ENCODE measurements at regions of chr11 and their contacts with region 1.

Region 1: GRCh38 chr11:78957476-78958245 is 383.0 kb upstream of the NARS2 start:
- DNase-seq: no peak
- ATAC-seq: no peak
- H3K4me3 ChIP-seq: no peak overlapping the region
- H3K27ac ChIP-seq: no peak overlapping the region
- H3K4me1 ChIP-seq: no peaks in the 10 kb centered on the region
- H3K27me3 ChIP-seq: no peaks in the 10 kb centered on the region
- CTCF ChIP-seq: no peak

Region 2: DNA sequence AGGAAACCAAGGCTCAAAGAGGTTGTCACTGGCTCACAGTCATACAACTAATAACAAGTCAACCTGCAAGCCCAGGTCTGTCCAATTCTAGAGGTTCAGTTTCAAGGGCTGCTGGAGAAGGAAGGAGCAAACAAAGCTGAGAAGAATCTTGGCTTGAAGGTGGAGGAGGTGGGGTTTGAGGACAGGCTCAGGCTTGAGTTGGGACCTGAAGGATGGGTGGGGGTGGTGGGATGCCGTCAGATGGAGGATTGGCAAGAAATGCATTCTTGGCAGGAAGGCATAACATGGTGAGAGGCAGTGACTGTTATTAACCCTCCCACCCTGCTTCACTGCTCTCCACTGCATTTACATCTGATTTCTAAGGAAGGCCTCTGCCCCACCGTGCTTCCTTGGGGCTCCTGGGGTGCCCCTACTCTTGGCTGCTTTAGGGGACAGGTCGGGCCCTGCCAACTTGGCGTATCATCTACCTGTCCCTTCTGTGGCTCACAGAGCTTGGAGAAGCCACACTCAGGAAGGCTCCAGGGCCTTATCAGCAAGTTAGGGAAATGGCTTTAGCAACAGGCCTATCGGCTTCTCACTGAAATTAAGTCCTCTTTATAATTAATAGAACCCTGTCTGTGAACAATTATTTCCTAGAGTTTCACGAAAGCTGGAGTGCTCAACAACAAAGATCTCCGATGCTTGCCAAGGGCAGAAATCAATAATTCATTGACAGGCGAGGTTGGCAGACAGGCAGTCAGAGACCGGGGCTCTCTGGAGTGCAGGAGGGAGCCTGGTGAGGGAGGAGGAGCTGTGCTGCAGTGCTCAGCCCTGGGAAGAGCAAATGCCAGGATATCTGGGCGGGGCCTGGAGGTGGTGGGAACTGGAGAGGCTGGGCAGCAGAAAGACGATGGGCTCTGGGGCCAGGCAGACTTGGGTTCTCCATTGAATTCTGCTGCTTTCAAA is 298.1 kb before region 1 on chr11:
- intact Hi-C with region 1: loop called in 1 of 3 experiments (anchors 10 kb)
- DNase-seq: peak in 5 of 6 donors; percentile 22 to 65 (median 51)
- ATAC-seq: peak; percentile 74 to 94 (median 88)
- H3K4me3 ChIP-seq: no peak overlapping the region
- H3K27ac ChIP-seq: no peak overlapping the region
- H3K4me1 ChIP-seq: no peaks in the 10 kb centered on the region
- H3K27me3 ChIP-seq: no peaks in the 10 kb centered on the region
- CTCF ChIP-seq: no peak

Measured in pancreas (tissue), 10 donors.